ENCODE measurements at regions of chr1 and their contacts with region 1.

Region 1: GRCh38 chr1:198465201-198466144 is 75.0 kb downstream of the ATP6V1G3 start:
- DNase-seq: peak; percentile 79
- H3K4me3 Mint-ChIP-seq: no peak overlapping the region
- H3K27ac Mint-ChIP-seq: peak overlapping the region; percentile 74
- H3K4me1 Mint-ChIP-seq: peaks cover 32% of the 10 kb centered on the region
- H3K27me3 Mint-ChIP-seq: no peaks in the 10 kb centered on the region
- CTCF ChIP-seq: peak; percentile 84

Region 2: GRCh38 chr1:197521118-197521739 is 944.2 kb before region 1 on chr1:
- CTCF ChIA-PET with region 1: interaction called, 4 read pairs
- POLR2A ChIA-PET with region 1: interaction called, 3 read pairs
- intact Hi-C with region 1: loop called (anchors 2 kb)
- DNase-seq: peak; percentile 67
- H3K4me3 Mint-ChIP-seq: no peak overlapping the region
- H3K27ac Mint-ChIP-seq: no peak overlapping the region
- H3K4me1 Mint-ChIP-seq: peaks cover 5% of the 10 kb centered on the region
- H3K27me3 Mint-ChIP-seq: no peaks in the 10 kb centered on the region
- CTCF ChIP-seq: peak; percentile 88

Region 3: GRCh38 chr1:197924516-197925123 is 540.9 kb before region 1 on chr1:
- CTCF ChIA-PET with region 1: interaction called, 21 read pairs
- POLR2A ChIA-PET with region 1: no interaction called
- intact Hi-C with region 1: loop called (anchors 1 kb)
- DNase-seq: peak; percentile 84
- H3K4me3 Mint-ChIP-seq: no peak overlapping the region
- H3K27ac Mint-ChIP-seq: no peak overlapping the region
- H3K4me1 Mint-ChIP-seq: peaks cover 5% of the 10 kb centered on the region
- H3K27me3 Mint-ChIP-seq: no peaks in the 10 kb centered on the region
- CTCF ChIP-seq: peak; percentile 84

Region 4: DNA sequence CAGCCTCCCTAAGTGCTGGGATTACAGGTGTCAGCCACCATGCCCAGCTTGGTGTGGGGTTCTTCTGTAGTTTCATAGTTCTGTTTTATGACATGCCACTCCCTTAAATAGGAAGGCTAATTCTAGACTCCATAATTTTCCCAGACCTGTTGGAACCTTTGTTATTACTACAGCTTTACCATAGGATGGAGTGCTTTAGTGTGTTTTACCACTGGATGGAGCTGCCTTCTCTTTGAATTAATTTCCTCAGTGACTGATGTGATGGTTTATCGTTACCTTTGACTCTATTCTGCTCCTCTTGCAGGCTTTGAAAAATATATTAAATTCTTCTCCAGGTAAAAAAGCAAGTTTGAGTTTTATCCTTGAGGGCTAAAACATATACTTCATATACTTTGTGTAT is 393.3 kb before region 1 on chr1:
- CTCF ChIA-PET with region 1: interaction called, 5 read pairs
- POLR2A ChIA-PET with region 1: no interaction called
- intact Hi-C with region 1: loop called (anchors 1 kb)
- DNase-seq: peak; percentile 14
- H3K4me3 Mint-ChIP-seq: no peak overlapping the region
- H3K27ac Mint-ChIP-seq: no peak overlapping the region
- H3K4me1 Mint-ChIP-seq: no peaks in the 10 kb centered on the region
- H3K27me3 Mint-ChIP-seq: no peaks in the 10 kb centered on the region
- CTCF ChIP-seq: no peak

Region 5: GRCh38 chr1:198275597-198275996 is 189.9 kb before region 1 on chr1:
- CTCF ChIA-PET with region 1: no interaction called
- POLR2A ChIA-PET with region 1: interaction called, 3 read pairs
- intact Hi-C with region 1: loop called (anchors 10 kb)
- DNase-seq: no peak
- H3K4me3 Mint-ChIP-seq: no peak overlapping the region
- H3K27ac Mint-ChIP-seq: no peak overlapping the region
- H3K4me1 Mint-ChIP-seq: peaks cover 5% of the 10 kb centered on the region
- H3K27me3 Mint-ChIP-seq: no peaks in the 10 kb centered on the region
- CTCF ChIP-seq: no peak

Region 6: GRCh38 chr1:198411240-198411639 is 54.2 kb before region 1 on chr1:
- CTCF ChIA-PET with region 1: no interaction called
- POLR2A ChIA-PET with region 1: no interaction called
- intact Hi-C with region 1: no loop called
- DNase-seq: no peak
- H3K4me3 Mint-ChIP-seq: no peak overlapping the region
- H3K27ac Mint-ChIP-seq: no peak overlapping the region
- H3K4me1 Mint-ChIP-seq: no peaks in the 10 kb centered on the region
- H3K27me3 Mint-ChIP-seq: no peaks in the 10 kb centered on the region
- CTCF ChIP-seq: no peak

Region 7: GRCh38 chr1:198449727-198450433 is 15.6 kb before region 1 on chr1:
- CTCF ChIA-PET with region 1: interaction called, 11 read pairs
- POLR2A ChIA-PET with region 1: interaction called, 33 read pairs
- intact Hi-C with region 1: no loop called
- DNase-seq: peak; percentile 43
- H3K4me3 Mint-ChIP-seq: peak overlapping the region; percentile 50
- H3K27ac Mint-ChIP-seq: peak overlapping the region; percentile 53
- H3K4me1 Mint-ChIP-seq: peaks cover 22% of the 10 kb centered on the region
- H3K27me3 Mint-ChIP-seq: no peaks in the 10 kb centered on the region
- CTCF ChIP-seq: no peak

Measured in MCF 10A (cell line).